Mammary epithelial cell (primary cell): ENCODE measurements at regions of chr6 and their contacts with region 1.

Region 1: GRCh38 chr6:139375232-139376016 is 976 bp upstream of the CITED2 start:
- DNase-seq: peak; percentile 94
- H3K4me3 ChIP-seq: peak overlapping the region; percentile 62 to 76 (median 70)
- H3K27ac ChIP-seq: peak overlapping the region; percentile 92
- H3K4me1 ChIP-seq: peaks cover 43% of the 10 kb centered on the region
- H3K27me3 ChIP-seq: no peaks in the 10 kb centered on the region
- CTCF ChIP-seq: peak in 1 of 2 donors; percentile 24

Region 2: GRCh38 chr6:139422105-139423036 is 46.9 kb after region 1 on chr6:
- CTCF ChIA-PET with region 1: no interaction called
- dilution Hi-C with region 1: no loop called
- in situ Hi-C with region 1: no loop called
- intact Hi-C with region 1: no loop called
- DNase-seq: no peak
- H3K4me3 ChIP-seq: no peak overlapping the region
- H3K27ac ChIP-seq: no peak overlapping the region
- H3K4me1 ChIP-seq: no peaks in the 10 kb centered on the region
- H3K27me3 ChIP-seq: no peaks in the 10 kb centered on the region
- CTCF ChIP-seq: no peak

Region 3: GRCh38 chr6:139452176-139452876 is 76.9 kb after region 1 on chr6:
- CTCF ChIA-PET with region 1: no interaction called
- dilution Hi-C with region 1: no loop called
- in situ Hi-C with region 1: no loop called
- intact Hi-C with region 1: loop called (anchors 5 kb)
- DNase-seq: peak; percentile 84
- H3K4me3 ChIP-seq: no peak overlapping the region
- H3K27ac ChIP-seq: peak overlapping the region; percentile 38
- H3K4me1 ChIP-seq: peaks cover 12% of the 10 kb centered on the region
- H3K27me3 ChIP-seq: no peaks in the 10 kb centered on the region
- CTCF ChIP-seq: no peak

Region 4: GRCh38 chr6:139577763-139578604 is 202.6 kb after region 1 on chr6:
- CTCF ChIA-PET with region 1: no interaction called
- dilution Hi-C with region 1: no loop called
- in situ Hi-C with region 1: no loop called
- intact Hi-C with region 1: loop called (anchors 2 kb)
- DNase-seq: peak; percentile 83
- H3K4me3 ChIP-seq: no peak overlapping the region
- H3K27ac ChIP-seq: peak overlapping the region; percentile 82
- H3K4me1 ChIP-seq: peaks cover 22% of the 10 kb centered on the region
- H3K27me3 ChIP-seq: no peaks in the 10 kb centered on the region
- CTCF ChIP-seq: no peak

Region 5: DNA sequence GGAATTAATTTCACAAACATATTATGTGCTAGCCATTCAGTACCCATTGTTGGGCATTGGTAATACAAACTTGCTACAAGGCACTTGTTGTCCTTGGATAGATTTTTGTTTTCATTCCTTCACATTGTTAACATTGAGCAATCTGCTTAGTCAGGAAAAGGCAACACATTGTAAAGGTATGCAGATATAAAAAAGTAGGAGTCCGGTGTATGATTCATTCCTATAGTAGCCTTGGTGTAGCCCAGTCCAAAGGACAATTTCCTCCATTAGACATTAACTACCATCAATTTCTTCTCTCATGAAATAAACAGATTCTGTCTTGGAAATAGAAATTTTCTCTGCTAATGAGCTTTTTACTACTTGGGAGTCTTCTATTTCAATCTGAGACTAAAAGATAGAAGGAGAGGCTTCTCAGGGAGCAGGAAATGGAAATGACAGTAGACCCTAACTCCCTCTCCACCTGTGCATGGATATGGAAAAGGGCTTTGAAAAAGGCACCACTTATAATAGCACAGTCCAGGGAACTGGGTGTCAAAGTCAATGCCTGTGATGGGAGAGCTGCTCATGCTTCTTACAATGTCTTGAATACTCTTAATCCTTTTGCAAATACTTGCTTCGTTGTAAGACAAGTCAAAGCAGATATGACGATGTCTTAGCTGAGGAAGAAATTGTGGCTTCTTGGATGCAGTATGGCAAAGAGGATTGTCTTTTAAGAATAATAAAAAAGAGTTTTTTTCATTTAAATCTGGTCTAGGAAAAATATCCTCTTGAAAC is 368.4 kb after region 1 on chr6:
- CTCF ChIA-PET with region 1: no interaction called
- dilution Hi-C with region 1: no loop called
- in situ Hi-C with region 1: no loop called
- intact Hi-C with region 1: no loop called
- DNase-seq: peak; percentile 88
- H3K4me3 ChIP-seq: no peak overlapping the region
- H3K27ac ChIP-seq: no peak overlapping the region
- H3K4me1 ChIP-seq: peaks cover 13% of the 10 kb centered on the region
- H3K27me3 ChIP-seq: no peaks in the 10 kb centered on the region
- CTCF ChIP-seq: no peak

Region 6: GRCh38 chr6:139764498-139764986 is 389.1 kb after region 1 on chr6:
- CTCF ChIA-PET with region 1: interaction called, 4 read pairs
- dilution Hi-C with region 1: no loop called
- in situ Hi-C with region 1: no loop called
- intact Hi-C with region 1: loop called (anchors 5 kb)
- DNase-seq: peak; percentile 86
- H3K4me3 ChIP-seq: no peak overlapping the region
- H3K27ac ChIP-seq: peak overlapping the region; percentile 64
- H3K4me1 ChIP-seq: peaks cover 24% of the 10 kb centered on the region
- H3K27me3 ChIP-seq: no peaks in the 10 kb centered on the region
- CTCF ChIP-seq: no peak

Region 7: GRCh38 chr6:139996253-139996834 is 620.9 kb after region 1 on chr6:
- CTCF ChIA-PET with region 1: no interaction called
- dilution Hi-C with region 1: no loop called
- in situ Hi-C with region 1: no loop called
- intact Hi-C with region 1: loop called (anchors 1 kb)
- DNase-seq: peak; percentile 11
- H3K4me3 ChIP-seq: no peak overlapping the region
- H3K27ac ChIP-seq: no peak overlapping the region
- H3K4me1 ChIP-seq: no peaks in the 10 kb centered on the region
- H3K27me3 ChIP-seq: no peaks in the 10 kb centered on the region
- CTCF ChIP-seq: peak in 1 of 2 donors; percentile 39

Region 8: DNA sequence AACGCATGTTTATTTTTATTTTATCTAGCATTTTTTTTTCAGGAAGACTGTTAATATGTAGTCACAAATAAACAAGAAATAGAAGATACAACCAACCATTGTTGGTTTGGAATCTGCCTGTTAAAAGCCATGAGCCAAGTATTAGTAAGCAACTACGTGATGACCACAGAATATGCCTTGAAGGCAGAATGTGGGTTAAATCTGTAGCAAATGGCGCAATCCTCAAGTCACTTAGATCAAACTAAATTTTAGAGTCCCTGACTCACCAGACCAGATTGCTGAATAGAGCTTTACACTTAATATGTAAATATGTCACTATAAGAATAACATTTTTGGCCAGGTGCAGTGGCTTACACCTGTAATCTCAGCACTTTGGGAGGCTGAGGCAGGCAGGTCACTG is 799.1 kb after region 1 on chr6:
- CTCF ChIA-PET with region 1: no interaction called
- dilution Hi-C with region 1: no loop called
- in situ Hi-C with region 1: no loop called
- intact Hi-C with region 1: loop called (anchors 10 kb)
- DNase-seq: peak; percentile 98
- H3K4me3 ChIP-seq: no peak overlapping the region
- H3K27ac ChIP-seq: peak overlapping the region; percentile 38
- H3K4me1 ChIP-seq: peaks cover 21% of the 10 kb centered on the region
- H3K27me3 ChIP-seq: no peaks in the 10 kb centered on the region
- CTCF ChIP-seq: no peak

Region 9: DNA sequence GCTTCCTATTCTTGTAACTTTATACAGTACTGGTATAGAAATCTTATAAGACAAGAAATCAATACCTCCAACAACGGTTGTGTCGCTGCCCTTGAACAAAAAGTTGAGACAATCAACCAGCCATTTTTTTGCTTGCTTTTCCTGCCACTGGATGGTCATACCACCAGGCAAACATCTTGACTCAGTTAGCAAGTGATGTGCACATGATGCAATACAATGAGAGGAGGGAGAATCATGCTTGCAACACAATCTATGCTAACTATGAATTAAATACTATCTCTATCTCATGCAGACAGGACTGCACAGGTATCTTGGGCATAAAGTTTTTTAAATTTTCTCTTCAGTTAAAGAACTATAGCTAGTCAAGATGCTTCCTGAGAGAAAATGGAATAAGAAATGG is 876.7 kb after region 1 on chr6:
- CTCF ChIA-PET with region 1: no interaction called
- dilution Hi-C with region 1: no loop called
- in situ Hi-C with region 1: no loop called
- intact Hi-C with region 1: no loop called
- DNase-seq: no peak
- H3K4me3 ChIP-seq: no peak overlapping the region
- H3K27ac ChIP-seq: no peak overlapping the region
- H3K4me1 ChIP-seq: no peaks in the 10 kb centered on the region
- H3K27me3 ChIP-seq: no peaks in the 10 kb centered on the region
- CTCF ChIP-seq: no peak

Region 10: DNA sequence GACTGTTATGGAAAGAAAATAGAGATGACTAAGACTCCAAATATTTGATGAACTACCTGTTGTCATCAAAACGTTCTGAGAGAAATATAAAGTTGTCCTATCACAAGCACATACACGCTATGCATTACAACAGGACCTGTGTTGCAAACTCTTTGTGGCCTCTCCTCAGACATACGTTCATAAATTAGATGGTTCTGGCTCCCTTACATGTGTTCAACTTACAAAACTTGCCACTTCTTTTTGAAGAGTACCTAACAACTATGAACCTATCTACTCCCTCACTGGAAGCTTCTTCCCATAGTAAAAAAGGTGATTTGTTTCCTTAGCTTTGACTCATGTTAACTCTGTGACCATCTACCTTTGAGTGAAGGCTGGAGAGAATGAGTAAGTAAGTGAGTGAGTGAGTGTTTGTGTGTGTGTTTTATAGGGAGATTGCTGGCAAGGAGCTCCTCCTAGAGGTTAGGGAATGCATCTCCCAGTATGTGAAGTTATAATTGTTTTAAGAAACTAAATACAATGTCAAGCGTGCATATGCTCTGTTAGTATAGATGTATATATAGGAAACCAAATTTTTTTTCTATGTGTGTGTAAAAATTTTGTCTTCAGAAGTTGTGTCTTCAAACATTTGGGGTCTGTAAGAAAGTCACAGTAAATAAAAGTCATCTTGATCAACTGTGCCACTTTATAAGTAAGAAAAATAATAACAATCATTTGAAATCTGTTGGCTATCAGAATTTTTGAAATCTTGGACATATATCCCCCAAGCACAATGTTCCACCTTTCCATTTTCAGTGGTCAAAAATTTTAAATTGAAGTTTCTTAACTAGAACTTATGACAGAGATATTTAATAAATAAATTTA is 1546.2 kb after region 1 on chr6:
- CTCF ChIA-PET with region 1: no interaction called
- dilution Hi-C with region 1: no loop called
- in situ Hi-C with region 1: loop called (anchors 10 kb)
- intact Hi-C with region 1: loop called (anchors 1 kb)
- DNase-seq: peak; percentile 89
- H3K4me3 ChIP-seq: no peak overlapping the region
- H3K27ac ChIP-seq: no peak overlapping the region
- H3K4me1 ChIP-seq: no peaks in the 10 kb centered on the region
- H3K27me3 ChIP-seq: no peaks in the 10 kb centered on the region
- CTCF ChIP-seq: peak; percentile 85 to 86